IMR-90 (cell line): ENCODE measurements at regions of chr14 and their contacts with region 1.

Region 1: GRCh38 chr14:80213599-80213998 is 2.3 kb upstream of the DIO2 start:
- DNase-seq: peak; percentile 59
- ATAC-seq: peak; percentile 65
- H3K4me3 ChIP-seq: no peak overlapping the region
- H3K27ac ChIP-seq: no peak overlapping the region
- H3K4me1 ChIP-seq: peaks cover 4% of the 10 kb centered on the region
- H3K27me3 ChIP-seq: no peaks in the 10 kb centered on the region
- CTCF ChIP-seq: peak; percentile 68
- POLR2A ChIP-seq: no peak
- RAD21 ChIP-seq: peak; percentile 74

Region 2: DNA sequence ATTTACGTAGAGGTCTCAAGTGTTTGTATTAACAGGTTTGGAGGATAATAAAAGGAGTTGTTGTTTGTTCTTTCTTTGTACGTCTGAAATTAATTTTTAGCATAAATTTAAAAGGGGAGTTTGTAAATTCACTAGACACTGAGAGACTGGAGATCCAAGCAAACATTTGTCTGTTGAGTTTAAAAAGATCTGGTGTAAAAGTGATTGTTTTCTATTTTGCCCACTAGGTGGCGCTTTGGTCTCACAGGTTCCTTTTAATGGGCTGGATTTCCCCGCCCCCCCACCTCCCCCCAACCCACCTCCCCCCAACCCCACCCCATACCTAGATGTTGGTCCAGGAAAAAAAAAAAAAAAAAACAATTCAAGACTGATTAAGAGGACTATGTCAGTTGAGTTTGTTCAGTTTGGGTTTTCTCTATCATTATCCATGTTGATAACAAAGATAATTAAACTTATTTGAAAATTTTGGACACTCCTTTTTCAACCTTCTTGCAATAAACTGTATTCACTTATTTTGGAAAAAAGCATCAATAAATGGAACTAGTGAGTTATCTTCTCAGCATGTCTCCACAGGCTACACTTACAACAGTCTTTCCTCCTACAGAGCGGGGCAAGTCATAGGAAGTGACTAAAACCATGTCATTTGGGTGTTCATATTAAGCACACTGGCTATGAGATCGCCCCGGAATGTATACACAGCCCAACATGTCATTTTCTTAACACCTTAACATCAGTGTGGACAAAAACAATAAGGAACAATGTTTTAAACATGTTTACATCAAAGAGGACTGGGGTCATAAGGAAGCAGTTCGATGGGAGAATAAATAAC is 1202.3 kb before region 1 on chr14:
- CTCF ChIA-PET with region 1: no interaction called
- POLR2A ChIA-PET with region 1: no interaction called
- dilution Hi-C with region 1: no loop called
- in situ Hi-C with region 1: no loop called
- intact Hi-C with region 1: loop called (anchors 10 kb)
- DNase-seq: peak; percentile 84
- ATAC-seq: peak; percentile 86
- H3K4me3 ChIP-seq: no peak overlapping the region
- H3K27ac ChIP-seq: no peak overlapping the region
- H3K4me1 ChIP-seq: no peaks in the 10 kb centered on the region; the same call in 1 of the 2 replicates
- H3K27me3 ChIP-seq: no peaks in the 10 kb centered on the region
- CTCF ChIP-seq: peak; percentile 56
- POLR2A ChIP-seq: no peak
- RAD21 ChIP-seq: peak; percentile 63

Region 3: DNA sequence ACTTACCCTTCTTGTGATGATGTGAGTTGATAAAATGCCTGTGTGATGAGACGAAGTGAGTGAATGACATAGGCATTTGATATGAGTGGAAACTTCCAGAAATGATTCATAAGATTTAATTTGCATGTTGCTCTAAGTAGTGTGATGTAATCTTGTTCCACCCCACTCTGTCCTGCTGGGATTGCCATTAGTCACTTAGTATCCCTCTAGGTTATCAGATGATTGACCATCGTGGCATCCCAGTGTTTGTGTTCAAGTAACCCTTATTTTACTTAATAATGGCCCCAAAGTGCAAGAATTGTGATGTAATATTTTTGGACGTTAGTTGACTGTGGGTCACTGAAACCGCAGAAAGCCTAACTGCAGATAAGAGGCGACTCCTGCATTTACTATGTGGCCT is 212.1 kb after region 1 on chr14:
- CTCF ChIA-PET with region 1: no interaction called
- POLR2A ChIA-PET with region 1: no interaction called
- dilution Hi-C with region 1: no loop called
- in situ Hi-C with region 1: no loop called
- intact Hi-C with region 1: loop called (anchors 2 kb)
- DNase-seq: peak; percentile 100
- ATAC-seq: peak; percentile 92
- H3K4me3 ChIP-seq: no peak overlapping the region
- H3K27ac ChIP-seq: no peak overlapping the region; the same call in 1 of the 2 replicates
- H3K4me1 ChIP-seq: peaks cover 10% of the 10 kb centered on the region
- H3K27me3 ChIP-seq: no peaks in the 10 kb centered on the region
- CTCF ChIP-seq: no peak
- POLR2A ChIP-seq: no peak
- RAD21 ChIP-seq: no peak

Region 4: DNA sequence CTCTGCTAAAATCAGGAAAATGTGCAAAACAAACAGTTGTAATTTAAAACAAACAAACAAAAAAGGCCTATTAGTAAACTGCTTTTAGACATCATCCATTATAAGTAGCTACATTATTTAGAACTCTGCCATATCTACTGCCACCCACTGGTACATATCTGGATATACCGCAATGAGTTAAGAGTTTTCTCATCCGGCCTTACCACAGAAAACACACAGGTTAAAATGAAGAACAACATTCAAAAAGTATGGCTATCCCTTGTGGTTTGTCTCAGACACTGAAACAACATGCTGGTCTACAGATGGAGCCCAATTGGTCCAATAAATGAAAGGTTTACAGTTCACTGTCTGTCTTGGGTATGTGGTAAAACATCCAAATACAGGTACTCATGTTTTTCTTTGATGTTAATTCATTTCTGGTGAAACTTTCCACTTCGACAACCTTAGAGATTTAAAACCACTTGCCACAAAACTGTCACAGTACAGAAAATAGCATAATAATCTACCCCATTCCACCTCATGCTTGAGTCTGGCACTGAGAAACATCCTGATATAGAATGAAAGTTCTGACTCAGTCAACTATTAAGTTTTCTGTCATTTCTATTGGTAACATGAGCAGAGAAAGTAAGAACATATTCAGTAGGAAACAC is 373.6 kb after region 1 on chr14:
- CTCF ChIA-PET with region 1: interaction called, 4 read pairs
- POLR2A ChIA-PET with region 1: no interaction called
- dilution Hi-C with region 1: no loop called
- in situ Hi-C with region 1: no loop called
- intact Hi-C with region 1: loop called (anchors 2 kb)
- DNase-seq: peak; percentile 48
- ATAC-seq: peak; percentile 74; the same call in 1 of the 2 replicates
- H3K4me3 ChIP-seq: no peak overlapping the region
- H3K27ac ChIP-seq: no peak overlapping the region
- H3K4me1 ChIP-seq: peaks cover 1% of the 10 kb centered on the region; the same call in 1 of the 2 replicates
- H3K27me3 ChIP-seq: no peaks in the 10 kb centered on the region
- CTCF ChIP-seq: peak; percentile 54
- POLR2A ChIP-seq: no peak
- RAD21 ChIP-seq: peak; percentile 59

Region 5: DNA sequence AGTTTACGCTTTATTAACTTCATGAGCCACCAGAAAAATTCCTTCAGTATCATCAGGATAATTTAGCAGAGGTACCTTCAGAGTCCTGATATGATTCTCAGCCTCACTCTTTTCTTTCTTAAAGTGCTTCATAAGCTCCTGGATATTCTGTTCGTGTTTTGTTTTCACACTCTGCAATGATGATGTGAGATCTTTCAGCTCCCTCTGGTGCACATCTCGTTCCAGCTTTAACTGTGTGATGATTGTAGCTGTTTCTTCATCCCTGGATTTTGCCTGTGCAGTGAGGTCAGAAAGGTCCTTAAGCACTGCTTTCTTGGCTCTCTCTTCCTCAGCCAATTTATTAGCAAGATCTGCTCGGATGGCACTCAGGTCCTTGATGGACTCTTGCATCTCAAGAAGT is 571.2 kb after region 1 on chr14:
- CTCF ChIA-PET with region 1: no interaction called
- POLR2A ChIA-PET with region 1: no interaction called
- dilution Hi-C with region 1: no loop called
- in situ Hi-C with region 1: no loop called
- intact Hi-C with region 1: loop called (anchors 10 kb)
- DNase-seq: peak; percentile 49
- ATAC-seq: peak; percentile 77
- H3K4me3 ChIP-seq: no peak overlapping the region
- H3K27ac ChIP-seq: no peak overlapping the region
- H3K4me1 ChIP-seq: peaks cover 3% of the 10 kb centered on the region
- H3K27me3 ChIP-seq: no peaks in the 10 kb centered on the region
- CTCF ChIP-seq: peak; percentile 44; the same call in 1 of the 2 replicates
- POLR2A ChIP-seq: no peak
- RAD21 ChIP-seq: peak; percentile 49